ENCODE measurements at regions of chr9 and their contacts with region 1.

Region 1: GRCh38 chr9:126860077-126860756 is at the start of gene ZBTB34:
- DNase-seq: peak; percentile 62 to 87 (median 79)
- H3K4me3 ChIP-seq: peak within 1 kb of the TSS; percentile 63 to 64
- H3K4me3 Mint-ChIP-seq: peak within 1 kb of the TSS; percentile 84 to 92 (median 88)
- H3K27ac ChIP-seq: peak within 1 kb of the TSS; percentile 60
- H3K27ac Mint-ChIP-seq: peak within 1 kb of the TSS; percentile 80 to 90 (median 88)
- H3K4me1 ChIP-seq: peaks cover 29% of the 10 kb centered on the region
- H3K4me1 Mint-ChIP-seq: peaks cover 18 to 43% (median 25%) of the 10 kb centered on the region in 4 donors
- H3K27me3 ChIP-seq: no peaks in the 10 kb centered on the region
- H3K27me3 Mint-ChIP-seq: peaks cover 0 to 1% of the 10 kb centered on the region in 2 donors
- total RNA-seq, gene ZBTB34: 9.4 to 10.1 TPM

Region 2: DNA sequence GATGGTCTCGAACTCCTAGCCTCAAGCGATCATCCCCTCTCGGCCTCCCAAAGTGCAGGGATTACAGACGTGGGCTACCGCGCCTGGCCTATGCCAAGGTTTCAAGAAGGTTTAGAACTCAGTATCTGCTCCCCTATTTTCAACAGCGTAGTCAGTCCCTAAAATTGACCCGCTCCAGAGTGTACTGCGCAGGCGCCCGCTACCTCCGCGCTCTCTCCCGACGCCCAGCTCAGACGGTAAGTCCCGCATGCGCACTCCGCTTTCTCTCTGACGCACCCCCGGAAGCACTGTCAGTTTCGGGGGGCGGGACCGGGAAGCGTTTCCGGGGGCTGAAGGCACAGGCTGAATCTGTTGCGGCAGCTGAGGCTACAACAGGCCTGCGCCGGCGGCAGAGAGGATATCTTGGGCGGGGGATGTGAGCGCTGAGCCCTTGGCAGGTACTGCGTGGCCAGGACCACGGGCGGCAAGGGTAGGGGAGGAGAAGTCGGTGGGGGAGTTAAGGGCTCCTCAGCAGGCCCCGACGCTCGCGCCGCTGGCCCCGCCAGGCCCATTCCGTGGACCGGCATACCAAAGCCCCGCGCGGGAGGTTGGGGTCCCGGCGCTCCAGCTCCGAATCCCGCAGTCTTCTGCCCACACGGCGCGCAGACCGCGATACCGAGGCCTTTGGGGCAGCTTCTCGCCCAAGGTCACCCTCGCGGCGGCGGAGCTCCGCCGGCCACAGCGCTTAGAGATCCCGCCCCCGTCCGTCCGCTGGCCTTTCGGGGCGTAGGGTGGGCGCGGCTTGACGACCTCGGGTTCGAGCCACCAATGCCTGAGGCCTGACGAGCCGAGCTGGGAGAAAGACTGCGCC is 55.3 kb before region 1 on chr9 and contains the start of gene ZBTB43:
- CTCF ChIA-PET with region 1: interaction called, 6 read pairs
- POLR2A ChIA-PET with region 1: interaction called, 8 read pairs
- intact Hi-C with region 1: loop called (anchors 1 kb)
- DNase-seq: peak; percentile 96 to 97 (median 97)
- H3K4me3 ChIP-seq: peak within 1 kb of the TSS; percentile 66 to 85
- H3K4me3 Mint-ChIP-seq: peak within 1 kb of the TSS; percentile 94 to 99 (median 98)
- H3K27ac ChIP-seq: peak within 1 kb of the TSS; percentile 96
- H3K27ac Mint-ChIP-seq: peak within 1 kb of the TSS; percentile 96 to 100 (median 99)
- H3K4me1 ChIP-seq: peaks cover 38% of the 10 kb centered on the region
- H3K4me1 Mint-ChIP-seq: peaks cover 27 to 46% (median 39%) of the 10 kb centered on the region in 4 donors
- H3K27me3 ChIP-seq: no peaks in the 10 kb centered on the region
- H3K27me3 Mint-ChIP-seq: no peaks in the 10 kb centered on the region
- total RNA-seq, gene ZBTB43: 19.9 to 22.7 TPM

Region 3: GRCh38 chr9:126914458-126915280 is 54.5 kb after region 1 on chr9 and contains the start of gene RALGPS1:
- CTCF ChIA-PET with region 1: no interaction called
- POLR2A ChIA-PET with region 1: interaction called, 4 read pairs
- intact Hi-C with region 1: loop called (anchors 5 kb)
- DNase-seq: peak; percentile 82 to 90 (median 88)
- H3K4me3 ChIP-seq: peak within 1 kb of the TSS in 1 of 2 donors; percentile 19
- H3K4me3 Mint-ChIP-seq: peak within 1 kb of the TSS; percentile 78 to 89 (median 84)
- H3K27ac ChIP-seq: peak within 1 kb of the TSS; percentile 32
- H3K27ac Mint-ChIP-seq: peak within 1 kb of the TSS in 6 of 7 donors; percentile 27 to 91 (median 72)
- H3K4me1 ChIP-seq: peaks cover 5% of the 10 kb centered on the region
- H3K4me1 Mint-ChIP-seq: peaks cover 5 to 14% (median 9%) of the 10 kb centered on the region in 4 donors
- H3K27me3 ChIP-seq: no peaks in the 10 kb centered on the region
- H3K27me3 Mint-ChIP-seq: peaks cover 2 to 3% of the 10 kb centered on the region in 2 donors
- total RNA-seq, gene RALGPS1: 9.8 to 10.3 TPM

Measured in CD4-positive, alpha-beta memory T cell (primary cell).